ENCODE measurements at regions of chr14 and their contacts with region 1.

Region 1: DNA sequence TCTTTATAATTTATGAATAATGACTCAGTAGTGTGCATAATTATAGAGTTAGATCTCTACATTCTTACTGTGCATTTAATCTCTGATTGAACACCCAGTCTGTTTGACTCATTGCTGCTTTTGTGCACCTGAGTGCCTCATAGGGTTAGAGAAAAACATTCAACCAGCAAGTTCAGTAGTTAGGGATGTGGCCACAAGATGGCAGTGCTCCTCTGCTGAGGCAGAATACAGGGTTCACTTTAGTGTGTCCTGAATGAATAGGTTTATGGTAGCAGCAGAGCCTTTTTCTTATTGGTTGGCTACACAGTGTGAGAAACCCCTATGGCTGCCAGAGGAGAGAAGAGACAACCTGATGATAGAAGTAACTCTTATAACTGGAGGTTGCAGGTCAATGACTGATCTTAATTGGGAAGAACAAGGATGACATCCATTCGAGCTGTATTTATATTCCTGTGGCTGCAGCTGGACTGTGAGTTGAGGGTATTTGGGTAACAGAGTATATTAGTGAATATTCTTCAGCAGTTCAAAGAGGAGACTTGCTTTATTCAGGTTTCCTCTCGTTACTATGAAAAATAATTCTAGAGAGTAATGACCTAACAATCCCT is 194.9 kb upstream of the OR4E1 start:
- DNase-seq: peak; percentile 90
- H3K4me3 ChIP-seq: no peak overlapping the region
- H3K27ac ChIP-seq: peak overlapping the region; percentile 88
- H3K4me1 ChIP-seq: peaks cover 29% of the 10 kb centered on the region
- H3K27me3 ChIP-seq: no peaks in the 10 kb centered on the region
- CTCF ChIP-seq: peak; percentile 80 to 83
- POLR2A ChIP-seq: no peak

Region 2: GRCh38 chr14:21694425-21694824 is 174.1 kb before region 1 on chr14:
- CTCF ChIA-PET with region 1: no interaction called
- POLR2A ChIA-PET with region 1: no interaction called
- dilution Hi-C with region 1: no loop called
- intact Hi-C with region 1: no loop called
- DNase-seq: no peak
- H3K4me3 ChIP-seq: no peak overlapping the region
- H3K27ac ChIP-seq: no peak overlapping the region
- H3K4me1 ChIP-seq: no peaks in the 10 kb centered on the region
- H3K27me3 ChIP-seq: no peaks in the 10 kb centered on the region
- CTCF ChIP-seq: no peak
- POLR2A ChIP-seq: no peak

Region 3: DNA sequence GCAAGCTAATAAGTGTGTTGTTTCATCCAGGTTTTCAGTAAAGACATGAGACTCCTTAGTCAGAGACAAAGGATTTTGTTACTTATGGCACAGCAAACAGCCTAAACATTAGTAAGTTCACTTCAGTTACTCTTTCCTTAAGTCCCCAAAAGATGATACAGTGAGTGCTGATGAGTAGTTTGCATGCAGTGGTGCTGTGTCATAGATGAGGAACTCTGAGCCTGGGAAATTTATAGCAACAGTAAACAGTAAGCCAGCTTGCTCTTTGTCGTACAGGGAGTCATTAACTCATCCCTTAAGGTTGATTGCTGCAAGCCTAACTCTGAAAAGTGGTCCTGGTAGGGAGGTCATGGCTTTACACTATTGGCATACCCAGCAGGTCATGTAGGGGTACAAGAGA is 13.7 kb after region 1 on chr14:
- CTCF ChIA-PET with region 1: interaction called, 7 read pairs
- POLR2A ChIA-PET with region 1: no interaction called
- dilution Hi-C with region 1: no loop called
- intact Hi-C with region 1: loop called (anchors 2 kb)
- DNase-seq: no peak
- H3K4me3 ChIP-seq: no peak overlapping the region
- H3K27ac ChIP-seq: no peak overlapping the region
- H3K4me1 ChIP-seq: peaks cover 6% of the 10 kb centered on the region
- H3K27me3 ChIP-seq: no peaks in the 10 kb centered on the region
- CTCF ChIP-seq: no peak
- POLR2A ChIP-seq: no peak

Region 4: GRCh38 chr14:21933681-21934080 is 65.1 kb after region 1 on chr14:
- CTCF ChIA-PET with region 1: interaction called, 19 read pairs
- POLR2A ChIA-PET with region 1: no interaction called
- dilution Hi-C with region 1: no loop called
- intact Hi-C with region 1: no loop called
- DNase-seq: peak; percentile 53
- H3K4me3 ChIP-seq: no peak overlapping the region
- H3K27ac ChIP-seq: no peak overlapping the region
- H3K4me1 ChIP-seq: no peaks in the 10 kb centered on the region
- H3K27me3 ChIP-seq: no peaks in the 10 kb centered on the region
- CTCF ChIP-seq: peak; percentile 35 to 52
- POLR2A ChIP-seq: no peak

Region 5: GRCh38 chr14:21987937-21988336 is 119.4 kb after region 1 on chr14:
- CTCF ChIA-PET with region 1: interaction called, 6 read pairs
- POLR2A ChIA-PET with region 1: no interaction called
- dilution Hi-C with region 1: no loop called
- intact Hi-C with region 1: loop called (anchors 2 kb)
- DNase-seq: peak; percentile 39
- H3K4me3 ChIP-seq: no peak overlapping the region
- H3K27ac ChIP-seq: no peak overlapping the region
- H3K4me1 ChIP-seq: no peaks in the 10 kb centered on the region
- H3K27me3 ChIP-seq: peaks cover 5 to 14% of the 10 kb centered on the region in 2 experiments
- CTCF ChIP-seq: peak; percentile 60 to 69
- POLR2A ChIP-seq: no peak

Measured in endothelial cell of umbilical vein (primary cell).